ENCODE measurements at regions of chr2 and their contacts with region 1.

Region 1: DNA sequence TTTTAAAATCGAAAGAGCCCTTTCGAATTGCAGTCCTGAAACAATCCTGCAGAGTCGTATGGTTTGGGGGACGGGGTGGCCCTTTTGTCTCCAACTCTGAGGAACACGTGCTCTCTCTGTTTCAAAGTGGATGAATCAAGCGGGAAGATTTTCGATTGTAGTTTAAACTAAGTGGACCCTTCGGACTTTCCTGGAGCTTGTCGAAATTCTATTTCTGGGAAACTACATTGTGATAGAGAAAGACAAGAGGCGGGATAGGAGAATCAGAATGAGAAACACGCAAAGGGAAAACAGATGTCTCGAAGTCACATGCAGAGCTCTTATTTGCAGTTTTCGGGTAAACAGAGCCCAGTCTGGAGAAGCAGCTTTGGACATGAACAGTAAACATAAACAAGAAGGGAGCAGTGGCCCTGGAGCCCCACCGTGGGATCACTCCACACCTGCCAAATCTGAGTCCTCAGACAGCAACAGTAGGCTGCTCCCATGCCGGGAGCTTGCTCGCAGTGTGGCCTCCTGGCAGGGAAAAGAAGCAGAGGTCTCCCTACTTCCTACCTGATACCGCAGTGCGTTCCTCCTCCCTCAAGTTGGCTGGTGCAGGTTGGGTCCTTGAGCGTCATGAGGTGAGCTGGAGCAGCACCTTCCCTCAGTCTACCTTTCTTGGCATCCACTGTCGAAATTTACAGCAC is 202.4 kb downstream of the SLC4A3 start:
- DNase-seq: no peak
- H3K4me3 Mint-ChIP-seq: no peak overlapping the region
- H3K27ac Mint-ChIP-seq: no peak overlapping the region
- H3K4me1 Mint-ChIP-seq: no peaks in the 10 kb centered on the region
- H3K27me3 Mint-ChIP-seq: no peaks in the 10 kb centered on the region

Region 2: GRCh38 chr2:219530048-219530963 is 299.5 kb before region 1 on chr2:
- CTCF ChIA-PET with region 1: no interaction called
- intact Hi-C with region 1: no loop called
- DNase-seq: peak; percentile 90
- H3K4me3 Mint-ChIP-seq: no peak overlapping the region
- H3K27ac Mint-ChIP-seq: no peak overlapping the region
- H3K4me1 Mint-ChIP-seq: no peaks in the 10 kb centered on the region
- H3K27me3 Mint-ChIP-seq: peaks cover 52% of the 10 kb centered on the region

Region 3: DNA sequence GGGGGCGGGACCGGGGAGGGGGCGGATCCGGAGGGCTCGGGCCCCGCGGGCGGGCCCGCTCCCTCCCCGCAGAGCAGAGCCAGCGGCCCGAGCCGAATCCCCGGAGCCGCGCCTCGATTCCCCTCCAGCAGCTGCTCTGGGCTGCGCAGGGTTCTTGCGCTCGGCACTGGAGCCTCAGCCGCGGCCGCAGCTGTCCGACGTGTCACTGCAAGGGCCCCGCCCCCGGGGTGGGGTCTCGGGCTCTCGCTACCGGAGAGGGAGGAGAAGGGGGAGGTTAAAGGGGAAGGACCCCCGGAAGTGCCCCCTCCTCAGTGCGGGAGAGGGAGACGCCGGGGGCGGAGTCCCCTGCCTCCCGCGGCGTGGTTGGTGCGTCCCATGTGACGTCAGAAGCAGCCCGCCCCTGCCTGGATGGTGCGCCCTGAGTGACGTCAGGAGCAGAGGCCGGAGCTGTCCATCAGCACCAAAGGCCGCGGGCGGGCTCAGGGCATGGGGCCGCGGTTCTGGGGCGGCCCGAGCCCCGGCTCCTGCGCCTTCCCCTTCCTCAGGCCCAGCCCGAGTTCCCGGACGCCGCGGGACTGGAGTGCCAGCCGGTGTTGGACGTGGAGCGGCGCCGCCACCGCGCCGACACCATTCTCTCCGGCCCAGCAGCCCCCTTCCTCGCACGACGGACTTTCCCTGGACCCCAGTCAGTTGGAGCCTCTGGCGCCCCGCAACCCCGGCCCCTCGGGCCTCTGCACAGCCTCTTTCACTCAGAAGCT is 286.0 kb before region 1 on chr2 and contains the starts of genes CHPF and TMEM198:
- CTCF ChIA-PET with region 1: no interaction called
- intact Hi-C with region 1: no loop called
- DNase-seq: peak; percentile 97
- H3K4me3 Mint-ChIP-seq: peak within 1 kb of the TSS; percentile 79
- H3K27ac Mint-ChIP-seq: no peak within 1 kb of the TSS
- H3K4me1 Mint-ChIP-seq: peaks cover 20% of the 10 kb centered on the region
- H3K27me3 Mint-ChIP-seq: peaks cover 8% of the 10 kb centered on the region
- total RNA-seq, gene CHPF: 8.5 to 9.0 TPM
- total RNA-seq, gene TMEM198: 0.86 to 1.1 TPM

Region 4: DNA sequence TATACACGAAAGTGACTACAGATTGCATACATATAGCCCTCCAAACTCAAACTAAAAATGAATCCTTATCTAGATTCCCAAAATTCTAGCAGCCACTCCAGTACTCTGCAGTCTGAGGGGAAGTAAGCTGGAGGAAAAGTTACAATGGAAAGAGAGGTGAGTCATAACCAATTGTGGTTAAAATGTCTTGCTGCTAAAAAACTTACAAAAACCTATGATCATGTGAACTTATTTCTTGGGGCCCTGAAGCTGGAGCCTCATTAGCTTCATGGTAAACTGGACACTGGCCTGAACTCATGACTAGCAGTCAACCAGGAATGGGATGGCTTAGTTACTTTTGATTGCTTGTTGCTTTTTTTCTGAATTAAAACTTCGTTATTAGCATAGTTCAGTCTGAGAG is 26.5 kb before region 1 on chr2:
- CTCF ChIA-PET with region 1: no interaction called
- intact Hi-C with region 1: no loop called
- DNase-seq: no peak
- H3K4me3 Mint-ChIP-seq: no peak overlapping the region
- H3K27ac Mint-ChIP-seq: no peak overlapping the region
- H3K4me1 Mint-ChIP-seq: no peaks in the 10 kb centered on the region
- H3K27me3 Mint-ChIP-seq: peaks cover 2% of the 10 kb centered on the region

Region 5: DNA sequence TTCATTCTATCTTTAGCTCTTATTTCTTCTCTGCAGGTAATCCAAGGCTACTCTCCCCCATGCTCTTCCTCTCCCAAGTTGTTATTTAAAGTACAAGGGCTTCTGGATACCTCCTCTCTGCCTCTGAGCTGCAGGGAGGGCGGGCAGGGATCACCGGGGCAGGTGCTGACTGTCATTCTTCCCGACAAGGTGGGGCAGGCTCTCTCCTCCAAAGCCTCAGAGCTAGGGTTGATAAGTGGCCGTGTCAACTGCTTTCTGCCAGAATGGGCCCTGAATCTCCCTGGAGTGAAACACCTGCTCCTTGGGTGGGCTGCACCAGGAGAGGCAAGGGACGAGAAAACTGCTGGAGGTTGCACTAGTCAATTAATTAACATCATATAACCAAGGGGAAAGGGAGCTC is 47.9 kb after region 1 on chr2:
- CTCF ChIA-PET with region 1: no interaction called
- intact Hi-C with region 1: no loop called
- DNase-seq: no peak
- H3K4me3 Mint-ChIP-seq: no peak overlapping the region
- H3K27ac Mint-ChIP-seq: no peak overlapping the region
- H3K4me1 Mint-ChIP-seq: no peaks in the 10 kb centered on the region
- H3K27me3 Mint-ChIP-seq: no peaks in the 10 kb centered on the region

Region 6: GRCh38 chr2:219939647-219940046 is 109.8 kb after region 1 on chr2:
- CTCF ChIA-PET with region 1: interaction called, 10 read pairs
- intact Hi-C with region 1: no loop called
- DNase-seq: no peak
- H3K4me3 Mint-ChIP-seq: no peak overlapping the region
- H3K27ac Mint-ChIP-seq: no peak overlapping the region
- H3K4me1 Mint-ChIP-seq: no peaks in the 10 kb centered on the region
- H3K27me3 Mint-ChIP-seq: peaks cover 2% of the 10 kb centered on the region

Measured in activated naive CD4-positive, alpha-beta T cell treated with anti-CD3 and anti-CD28 coated beads for 36 hours (primary cell).